ENCODE measurements at regions of chr10 and their contacts with region 1.

Region 1: GRCh38 chr10:130110246-130111112 is at the start of gene C10orf143:
- DNase-seq: peak; percentile 96
- ATAC-seq: peak; percentile 83
- H3K4me3 Mint-ChIP-seq: peak within 1 kb of the TSS; percentile 85
- H3K27ac Mint-ChIP-seq: peak within 1 kb of the TSS; percentile 96
- H3K4me1 Mint-ChIP-seq: peaks cover 42% of the 10 kb centered on the region
- H3K27me3 Mint-ChIP-seq: no peaks in the 10 kb centered on the region
- total RNA-seq, gene C10orf143: 4.4 to 4.7 TPM

Region 2: DNA sequence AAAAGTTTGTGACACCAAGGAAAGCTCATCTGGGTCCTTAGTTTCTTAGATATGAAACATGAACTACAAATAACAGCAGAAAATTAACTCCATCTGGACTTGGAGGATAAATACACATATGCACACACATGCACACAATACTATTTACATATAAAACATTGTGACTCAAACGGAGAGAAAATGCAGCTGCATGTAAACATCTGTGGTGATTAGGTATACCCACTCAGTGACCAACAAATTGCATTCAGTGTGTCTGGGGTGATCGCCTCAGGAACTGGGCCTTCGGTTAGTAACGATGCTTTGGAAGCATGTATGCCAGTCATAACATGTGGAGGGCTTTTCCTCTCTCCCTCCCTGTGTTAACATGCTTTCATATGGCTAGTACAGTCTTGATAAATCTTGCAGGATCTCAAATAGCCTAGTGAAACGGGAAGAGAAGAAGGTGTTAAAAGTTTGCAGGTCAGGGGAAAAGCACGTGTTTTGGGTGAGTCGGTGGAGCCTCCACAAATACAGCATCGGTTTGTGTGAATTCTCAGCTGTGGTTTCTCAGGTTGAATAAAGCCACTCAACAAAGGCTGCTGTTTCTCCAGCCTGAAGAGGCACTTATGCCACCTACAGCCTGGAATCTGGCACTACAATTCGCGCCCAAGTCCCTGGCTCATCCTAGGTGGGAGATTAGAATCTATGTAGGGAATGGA is 17.0 kb after region 1 on chr10:
- CTCF ChIA-PET with region 1: interaction called, 40 read pairs
- POLR2A ChIA-PET with region 1: interaction called, 23 read pairs
- DNase-seq: peak; percentile 63
- ATAC-seq: peak; percentile 92
- H3K4me3 Mint-ChIP-seq: no peak overlapping the region
- H3K27ac Mint-ChIP-seq: no peak overlapping the region
- H3K4me1 Mint-ChIP-seq: peaks cover 6% of the 10 kb centered on the region
- H3K27me3 Mint-ChIP-seq: peaks cover 48% of the 10 kb centered on the region

Region 3: DNA sequence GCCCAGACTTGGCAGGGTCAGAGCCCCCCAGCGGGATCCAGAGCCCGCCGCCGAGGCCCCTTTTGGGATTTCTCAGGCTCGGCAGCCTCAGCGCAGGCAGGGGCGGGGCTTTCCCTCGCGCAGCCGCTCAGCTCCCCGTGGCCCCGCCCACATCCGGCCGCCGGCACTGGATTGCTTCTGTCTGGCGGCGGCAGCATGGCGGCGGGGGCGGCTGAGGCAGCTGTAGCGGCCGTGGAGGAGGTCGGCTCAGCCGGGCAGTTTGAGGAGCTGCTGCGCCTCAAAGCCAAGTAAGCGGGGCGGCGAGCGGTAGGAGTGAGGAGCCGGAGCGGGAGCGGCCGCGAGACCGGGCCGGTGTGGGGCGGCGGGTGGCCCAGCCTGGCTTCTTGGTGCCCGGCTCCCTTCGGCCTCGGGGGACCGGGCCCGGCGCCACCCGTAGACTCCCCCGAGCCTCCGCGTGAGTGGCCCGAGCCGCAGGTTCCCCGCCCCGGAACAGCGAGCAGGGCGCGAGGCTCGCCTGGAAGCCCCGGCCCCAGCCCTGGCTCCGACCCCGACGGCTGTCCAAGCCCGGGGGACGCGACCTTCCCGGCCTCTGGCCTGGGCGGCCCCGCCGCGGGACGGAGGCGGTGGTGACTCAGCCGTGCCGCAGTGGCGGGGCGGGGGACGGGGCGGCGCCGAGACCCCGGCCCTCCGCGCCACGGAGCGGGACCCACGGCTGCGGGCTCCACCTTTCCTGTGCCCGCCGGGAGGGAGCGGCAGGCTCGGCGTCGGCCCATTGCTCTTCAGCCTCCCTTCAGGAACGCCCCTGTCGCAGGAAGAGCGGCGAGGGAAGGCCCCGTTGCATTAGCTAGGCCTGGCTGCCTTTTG is 26.0 kb after region 1 on chr10 and contains the start of gene GLRX3:
- CTCF ChIA-PET with region 1: interaction called, 35 read pairs
- POLR2A ChIA-PET with region 1: interaction called, 61 read pairs
- DNase-seq: peak; percentile 90
- ATAC-seq: peak; percentile 90
- H3K4me3 Mint-ChIP-seq: peak within 1 kb of the TSS; percentile 91
- H3K27ac Mint-ChIP-seq: peak within 1 kb of the TSS; percentile 93
- H3K4me1 Mint-ChIP-seq: peaks cover 52% of the 10 kb centered on the region
- H3K27me3 Mint-ChIP-seq: peaks cover 13% of the 10 kb centered on the region
- total RNA-seq, gene GLRX3: 79.4 to 80.6 TPM

Region 4: GRCh38 chr10:130141878-130142277 is 31.4 kb after region 1 on chr10:
- CTCF ChIA-PET with region 1: interaction called, 35 read pairs
- POLR2A ChIA-PET with region 1: interaction called, 61 read pairs
- DNase-seq: peak; percentile 31
- ATAC-seq: peak; percentile 50
- H3K4me3 Mint-ChIP-seq: peak overlapping the region; percentile 16
- H3K27ac Mint-ChIP-seq: peak overlapping the region; percentile 36
- H3K4me1 Mint-ChIP-seq: peaks cover 73% of the 10 kb centered on the region
- H3K27me3 Mint-ChIP-seq: no peaks in the 10 kb centered on the region

Region 5: DNA sequence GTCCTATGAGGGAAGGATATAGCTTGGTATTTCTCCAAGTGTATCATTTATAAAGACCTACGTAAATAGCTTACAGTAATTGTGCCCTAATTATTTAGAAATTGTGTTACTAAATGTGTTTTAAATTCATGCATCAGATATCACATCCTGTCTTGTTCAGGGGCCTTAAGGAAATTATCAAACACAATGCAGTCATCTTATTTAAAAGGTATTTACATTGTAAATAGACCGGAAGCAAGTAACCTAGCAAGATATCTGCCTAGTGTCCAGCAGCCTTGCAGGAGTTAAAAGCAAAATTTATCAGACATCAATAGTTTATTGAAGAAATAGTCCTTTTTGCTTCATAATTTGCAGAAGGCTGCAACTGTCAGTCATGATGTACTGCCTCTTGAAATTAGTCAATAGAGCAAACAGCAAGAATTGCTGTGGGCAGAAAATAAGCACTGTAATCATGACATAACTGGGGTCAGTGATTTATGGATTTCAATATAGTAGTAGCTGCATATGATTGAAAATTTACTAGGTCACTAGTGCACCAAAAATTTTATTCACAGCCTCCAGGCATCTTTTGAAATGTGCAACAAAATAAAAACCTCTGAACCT is 48.8 kb after region 1 on chr10:
- CTCF ChIA-PET with region 1: interaction called, 24 read pairs
- POLR2A ChIA-PET with region 1: interaction called, 4 read pairs
- DNase-seq: no peak
- ATAC-seq: no peak
- H3K4me3 Mint-ChIP-seq: no peak overlapping the region
- H3K27ac Mint-ChIP-seq: no peak overlapping the region
- H3K4me1 Mint-ChIP-seq: peaks cover 18% of the 10 kb centered on the region
- H3K27me3 Mint-ChIP-seq: no peaks in the 10 kb centered on the region

Region 6: DNA sequence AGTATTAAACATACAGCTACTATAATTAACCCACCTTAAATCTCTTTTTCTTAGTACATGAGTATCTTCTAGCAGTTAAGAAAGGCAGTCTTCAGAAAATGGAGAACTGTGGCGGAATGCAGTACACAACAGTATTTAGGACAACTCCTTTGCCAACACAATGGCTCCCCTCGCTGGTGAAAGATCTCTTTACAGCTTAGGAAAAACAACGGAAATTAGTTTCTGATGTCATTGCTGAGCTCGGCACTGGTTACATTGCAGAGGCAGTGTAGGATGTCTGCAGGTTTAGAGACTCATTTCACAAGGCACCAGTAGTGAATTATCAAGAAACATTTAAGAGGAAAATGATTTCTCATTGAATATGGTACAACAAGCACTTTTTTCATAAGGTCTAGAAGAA is 69.2 kb after region 1 on chr10:
- CTCF ChIA-PET with region 1: interaction called, 23 read pairs
- POLR2A ChIA-PET with region 1: interaction called, 3 read pairs
- DNase-seq: peak; percentile 65
- ATAC-seq: peak; percentile 53
- H3K4me3 Mint-ChIP-seq: no peak overlapping the region
- H3K27ac Mint-ChIP-seq: no peak overlapping the region
- H3K4me1 Mint-ChIP-seq: peaks cover 23% of the 10 kb centered on the region
- H3K27me3 Mint-ChIP-seq: no peaks in the 10 kb centered on the region

Measured in activated CD8-positive, alpha-beta T cell treated with anti-CD3 and anti-CD28 coated beads, Interleukin-2, amount 10 ng/mL, durations not matched to agents 7 days and 5 days (primary cell).